Activated T-helper 2 cell treated with anti-CD3 and anti-CD28 coated beads, Interferon-gamma antibody, Interleukin-2, Interleukin-4, amounts not matched to agents 10 μg/mL and 5 μg/mL and 100 μg/mL, durations not matched to agents 14 hours and 24 hours and 36 hours (primary cell): ENCODE measurements at regions of chr5 and their contacts with region 1.

Region 1: GRCh38 chr5:142014911-142015584 is 2.2 kb upstream of the GNPDA1 start:
- DNase-seq: peak; percentile 30
- H3K4me3 Mint-ChIP-seq: peak overlapping the region; percentile 41
- H3K27ac Mint-ChIP-seq: peak overlapping the region; percentile 96
- H3K4me1 Mint-ChIP-seq: peaks cover 61% of the 10 kb centered on the region
- H3K27me3 Mint-ChIP-seq: no peaks in the 10 kb centered on the region

Region 2: DNA sequence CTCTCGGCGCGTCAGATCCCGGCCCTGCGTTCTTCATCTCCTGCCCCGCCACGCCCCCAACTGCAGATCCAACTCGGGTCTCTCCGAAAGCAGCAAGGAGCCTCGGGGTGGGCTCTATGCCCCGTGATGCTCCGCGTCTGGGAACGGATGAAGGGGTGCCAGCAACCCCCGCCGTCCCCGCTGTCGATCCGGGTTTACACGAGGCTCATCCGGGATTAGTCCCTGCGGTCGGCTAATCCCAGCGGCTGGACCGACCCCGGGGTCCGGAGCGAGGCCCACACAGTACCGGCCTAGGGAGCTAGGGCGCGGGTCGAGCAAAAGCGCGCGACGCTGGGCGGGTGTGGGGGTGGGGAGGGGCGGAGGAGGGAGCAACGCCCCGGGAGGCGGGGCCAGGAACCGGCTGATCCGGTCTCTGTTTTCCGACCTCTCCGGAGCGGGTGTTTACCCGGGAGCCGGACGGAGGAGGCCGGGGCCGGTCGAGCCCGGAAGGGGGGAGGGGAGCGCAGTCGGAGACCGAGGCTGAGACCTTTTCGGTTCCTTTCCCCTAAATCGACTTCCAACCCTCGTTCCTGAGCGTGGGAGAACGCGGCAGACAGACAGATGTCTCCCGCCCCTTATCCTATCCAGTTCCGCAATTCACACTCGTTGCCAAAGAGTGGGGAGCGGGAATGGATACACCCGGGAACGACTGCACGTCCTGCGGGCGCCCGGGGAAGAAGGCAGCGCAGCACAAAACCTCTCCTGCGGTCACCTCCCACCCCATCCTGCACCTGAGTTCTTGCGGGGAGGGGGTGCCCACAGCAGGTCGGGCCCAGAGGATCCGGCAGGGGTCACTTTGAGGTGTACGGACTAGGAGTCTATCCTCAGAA is 165.4 kb before region 1 on chr5:
- intact Hi-C with region 1: loop called (anchors 2 kb)
- DNase-seq: peak; percentile 66
- H3K4me3 Mint-ChIP-seq: peak overlapping the region; percentile 85
- H3K27ac Mint-ChIP-seq: peak overlapping the region; percentile 84
- H3K4me1 Mint-ChIP-seq: peaks cover 14% of the 10 kb centered on the region
- H3K27me3 Mint-ChIP-seq: no peaks in the 10 kb centered on the region

Region 3: DNA sequence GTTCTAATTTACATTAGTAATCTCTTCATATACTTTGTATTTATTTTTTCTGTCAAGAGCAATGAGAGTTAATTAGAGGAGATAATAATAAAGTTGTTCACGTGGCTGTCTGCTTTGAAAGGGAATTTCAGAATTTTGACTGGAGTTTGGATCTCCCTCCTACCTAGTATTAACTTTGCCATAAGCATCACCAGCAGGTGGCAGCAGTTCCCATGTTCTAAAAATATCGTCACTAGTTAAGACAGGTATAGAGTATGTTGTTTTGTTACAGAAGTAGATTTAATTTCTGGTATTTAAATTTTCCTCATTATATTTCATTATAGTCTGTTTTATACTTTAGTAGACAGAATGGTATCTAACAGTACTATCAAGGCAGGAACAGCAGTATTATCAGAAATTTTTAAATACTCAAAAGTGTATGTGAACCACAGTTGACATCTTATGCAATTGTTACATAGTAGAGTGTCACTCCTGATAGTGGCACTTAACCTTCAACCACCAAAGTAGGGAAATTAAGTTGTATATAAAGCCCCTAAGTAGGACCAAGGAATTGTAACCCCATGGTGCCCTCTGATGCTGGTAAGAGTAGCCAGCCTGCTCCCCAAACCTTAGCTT is 22.6 kb before region 1 on chr5:
- intact Hi-C with region 1: loop called (anchors 1 kb)
- DNase-seq: no peak
- H3K4me3 Mint-ChIP-seq: no peak overlapping the region
- H3K27ac Mint-ChIP-seq: no peak overlapping the region
- H3K4me1 Mint-ChIP-seq: peaks cover 4% of the 10 kb centered on the region
- H3K27me3 Mint-ChIP-seq: no peaks in the 10 kb centered on the region

Region 4: GRCh38 chr5:142082182-142082781 is 67.2 kb after region 1 on chr5:
- intact Hi-C with region 1: loop called (anchors 2 kb)
- DNase-seq: no peak
- H3K4me3 Mint-ChIP-seq: no peak overlapping the region
- H3K27ac Mint-ChIP-seq: peak overlapping the region; percentile 76
- H3K4me1 Mint-ChIP-seq: peaks cover 32% of the 10 kb centered on the region
- H3K27me3 Mint-ChIP-seq: no peaks in the 10 kb centered on the region

Region 5: GRCh38 chr5:142108432-142109330 is 93.6 kb after region 1 on chr5 and contains the start of gene NDFIP1:
- intact Hi-C with region 1: loop called (anchors 1 kb)
- DNase-seq: peak; percentile 85
- H3K4me3 Mint-ChIP-seq: peak within 1 kb of the TSS; percentile 98
- H3K27ac Mint-ChIP-seq: peak within 1 kb of the TSS; percentile 98
- H3K4me1 Mint-ChIP-seq: peaks cover 60% of the 10 kb centered on the region
- H3K27me3 Mint-ChIP-seq: no peaks in the 10 kb centered on the region
- total RNA-seq, gene NDFIP1: 118 and 121 TPM in 2 replicates

Region 6: DNA sequence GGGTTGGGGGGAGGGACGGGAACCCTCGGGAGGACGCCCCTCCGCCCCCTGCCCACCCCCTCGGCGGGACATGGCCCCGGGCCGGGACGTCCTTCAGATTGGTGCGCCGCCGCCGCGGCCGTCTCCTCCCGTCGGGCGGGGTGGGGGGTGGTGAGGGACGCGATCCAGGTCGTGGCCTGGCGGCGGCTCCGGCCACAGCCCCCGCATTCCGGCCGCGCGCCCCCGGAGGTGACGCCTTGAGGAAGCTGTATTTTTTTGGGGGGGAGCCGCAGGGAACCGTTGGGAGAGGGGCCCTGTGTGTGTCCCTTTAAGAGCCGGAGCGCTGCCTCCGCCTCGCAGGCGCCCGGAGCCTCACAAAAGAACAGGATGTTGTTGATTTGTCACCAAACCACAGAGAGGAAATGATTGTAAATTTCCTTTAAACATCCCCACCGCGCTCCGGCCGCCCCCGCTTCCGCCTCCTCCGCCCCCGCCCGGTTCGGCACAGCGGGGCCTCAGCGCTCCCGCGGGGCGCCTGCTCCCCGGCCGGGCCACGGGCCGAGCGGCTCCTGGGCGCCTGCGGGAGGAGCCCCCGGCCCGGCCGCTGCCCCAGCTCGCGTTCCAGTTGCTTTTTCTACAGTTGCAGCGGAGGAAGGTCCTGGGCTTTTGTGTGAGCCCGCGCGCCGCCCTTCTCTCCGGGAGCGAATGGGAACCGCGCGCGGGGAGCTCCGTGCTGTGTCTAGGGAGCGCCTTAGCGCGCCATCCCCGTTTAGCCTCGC is 341.8 kb after region 1 on chr5:
- intact Hi-C with region 1: loop called (anchors 1 kb)
- DNase-seq: peak; percentile 87
- H3K4me3 Mint-ChIP-seq: peak overlapping the region; percentile 73
- H3K27ac Mint-ChIP-seq: peak overlapping the region; percentile 90
- H3K4me1 Mint-ChIP-seq: peaks cover 34% of the 10 kb centered on the region
- H3K27me3 Mint-ChIP-seq: peaks cover 9% of the 10 kb centered on the region